Activated CD8-positive, alpha-beta T cell treated with anti-CD3 and anti-CD28 coated beads for 36 hours (primary cell): ENCODE measurements at regions of chr14 and their contacts with region 1.

Region 1: DNA sequence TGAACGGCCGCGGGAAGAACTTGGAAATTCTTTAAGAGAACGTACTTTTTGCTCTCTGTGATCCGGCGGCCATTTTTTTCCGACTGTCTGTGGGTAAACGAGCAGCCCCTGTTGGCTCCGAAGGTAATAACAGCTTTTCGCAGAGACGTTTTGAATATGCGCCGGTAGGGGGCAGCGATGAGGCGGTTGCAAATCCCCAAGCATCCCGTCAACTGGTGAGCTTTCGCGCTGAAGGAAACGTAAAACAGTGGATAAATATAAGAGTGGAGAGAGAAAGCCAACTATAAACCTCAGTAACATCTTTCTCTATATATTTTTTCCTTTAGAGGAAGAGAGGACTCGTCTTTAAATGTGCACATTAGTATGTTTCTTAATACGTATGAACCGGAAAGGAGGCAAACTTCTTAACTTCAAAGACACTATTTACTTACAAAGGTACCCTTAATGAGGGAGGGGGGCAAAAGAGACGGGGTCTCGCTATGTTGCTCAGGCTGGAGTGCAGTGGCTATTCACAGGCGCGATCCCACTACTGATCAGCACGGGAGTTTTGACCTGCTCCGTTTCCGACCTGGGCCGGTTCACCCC is 9.6 kb upstream of the NEMF start:
- DNase-seq: peak; percentile 92
- ATAC-seq: peak; percentile 21
- H3K4me3 Mint-ChIP-seq: no peak overlapping the region
- H3K27ac Mint-ChIP-seq: no peak overlapping the region
- H3K4me1 Mint-ChIP-seq: peaks cover 20% of the 10 kb centered on the region
- H3K27me3 Mint-ChIP-seq: peaks cover 2% of the 10 kb centered on the region
- CTCF ChIP-seq: peak; percentile 100

Region 2: DNA sequence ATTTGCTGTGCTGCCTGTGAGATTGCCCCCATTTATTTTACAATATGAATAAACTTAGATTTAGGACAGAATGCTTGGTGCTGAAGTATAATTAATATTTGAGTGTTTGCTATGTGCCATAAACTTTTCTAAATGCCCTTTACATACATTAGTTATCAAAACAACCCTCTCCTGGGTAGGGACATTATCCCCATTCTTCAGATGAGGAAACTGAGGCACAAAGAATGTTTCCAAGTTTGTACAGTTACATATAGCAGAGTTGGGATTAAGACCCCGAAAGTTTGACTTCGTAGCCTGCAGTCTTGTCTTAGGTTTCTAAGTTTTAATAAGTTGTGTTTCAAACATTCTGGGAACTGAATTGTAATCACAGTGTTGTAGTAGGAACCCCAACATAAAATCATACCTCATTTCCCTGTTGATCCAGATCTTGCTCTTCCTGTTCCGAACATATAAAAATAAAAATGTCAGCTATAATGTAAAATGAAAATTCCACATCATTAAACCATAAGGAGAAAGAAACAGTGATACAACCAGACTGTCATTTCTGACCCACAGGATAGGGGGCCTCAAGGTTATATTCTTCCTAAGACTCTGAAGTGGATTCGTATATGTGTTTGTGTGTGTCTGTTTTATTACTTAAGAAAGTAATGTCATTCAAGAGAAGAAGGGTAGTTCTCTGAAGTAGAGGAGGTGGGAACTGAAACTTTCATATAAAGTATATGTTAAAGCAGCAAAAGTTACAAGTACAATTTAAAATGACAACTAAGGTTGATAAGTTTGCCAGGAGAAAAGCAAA is 75.7 kb before region 1 on chr14:
- CTCF ChIA-PET with region 1: no interaction called
- POLR2A ChIA-PET with region 1: no interaction called
- intact Hi-C with region 1: no loop called
- DNase-seq: no peak
- ATAC-seq: no peak
- H3K4me3 Mint-ChIP-seq: no peak overlapping the region
- H3K27ac Mint-ChIP-seq: peak overlapping the region; percentile 75
- H3K4me1 Mint-ChIP-seq: no peaks in the 10 kb centered on the region
- H3K27me3 Mint-ChIP-seq: no peaks in the 10 kb centered on the region
- CTCF ChIP-seq: no peak

Region 3: DNA sequence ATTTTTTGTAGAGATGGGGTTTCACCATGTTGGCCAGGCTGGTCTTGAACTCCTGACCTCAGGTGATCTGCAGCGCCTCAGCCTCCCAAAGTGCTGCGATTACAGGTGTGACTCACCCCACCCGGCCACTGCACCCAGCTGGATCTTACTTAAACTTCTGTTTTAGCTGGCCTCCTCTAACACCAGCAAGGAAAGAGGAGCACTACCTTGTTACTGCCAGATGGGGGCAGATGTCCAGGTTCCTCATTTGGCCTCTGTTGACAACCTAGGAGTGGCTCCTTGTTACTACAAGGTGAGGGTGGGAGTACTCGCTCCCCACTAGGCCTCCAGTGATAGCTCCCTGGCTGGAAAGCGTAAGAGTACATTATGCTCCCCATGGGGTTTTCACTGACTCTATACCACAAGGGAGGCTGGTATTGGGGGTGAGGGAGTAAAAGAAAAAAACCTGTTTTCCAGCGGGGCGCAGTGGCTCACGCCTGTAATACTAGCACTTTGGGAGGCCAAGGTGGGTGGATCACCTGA is 17.6 kb after region 1 on chr14:
- CTCF ChIA-PET with region 1: interaction called, 31 read pairs
- POLR2A ChIA-PET with region 1: interaction called, 9 read pairs
- intact Hi-C with region 1: no loop called
- DNase-seq: peak; percentile 84
- ATAC-seq: peak; percentile 98
- H3K4me3 Mint-ChIP-seq: no peak overlapping the region
- H3K27ac Mint-ChIP-seq: no peak overlapping the region
- H3K4me1 Mint-ChIP-seq: peaks cover 20% of the 10 kb centered on the region
- H3K27me3 Mint-ChIP-seq: no peaks in the 10 kb centered on the region
- CTCF ChIP-seq: peak; percentile 77

Region 4: GRCh38 chr14:49971156-49972130 is 109.3 kb after region 1 on chr14:
- CTCF ChIA-PET with region 1: interaction called, 16 read pairs
- POLR2A ChIA-PET with region 1: interaction called, 11 read pairs
- intact Hi-C with region 1: no loop called
- DNase-seq: peak; percentile 90
- ATAC-seq: peak; percentile 75
- H3K4me3 Mint-ChIP-seq: peak overlapping the region; percentile 69
- H3K27ac Mint-ChIP-seq: peak overlapping the region; percentile 94
- H3K4me1 Mint-ChIP-seq: peaks cover 56% of the 10 kb centered on the region
- H3K27me3 Mint-ChIP-seq: no peaks in the 10 kb centered on the region
- CTCF ChIP-seq: no peak

Region 5: DNA sequence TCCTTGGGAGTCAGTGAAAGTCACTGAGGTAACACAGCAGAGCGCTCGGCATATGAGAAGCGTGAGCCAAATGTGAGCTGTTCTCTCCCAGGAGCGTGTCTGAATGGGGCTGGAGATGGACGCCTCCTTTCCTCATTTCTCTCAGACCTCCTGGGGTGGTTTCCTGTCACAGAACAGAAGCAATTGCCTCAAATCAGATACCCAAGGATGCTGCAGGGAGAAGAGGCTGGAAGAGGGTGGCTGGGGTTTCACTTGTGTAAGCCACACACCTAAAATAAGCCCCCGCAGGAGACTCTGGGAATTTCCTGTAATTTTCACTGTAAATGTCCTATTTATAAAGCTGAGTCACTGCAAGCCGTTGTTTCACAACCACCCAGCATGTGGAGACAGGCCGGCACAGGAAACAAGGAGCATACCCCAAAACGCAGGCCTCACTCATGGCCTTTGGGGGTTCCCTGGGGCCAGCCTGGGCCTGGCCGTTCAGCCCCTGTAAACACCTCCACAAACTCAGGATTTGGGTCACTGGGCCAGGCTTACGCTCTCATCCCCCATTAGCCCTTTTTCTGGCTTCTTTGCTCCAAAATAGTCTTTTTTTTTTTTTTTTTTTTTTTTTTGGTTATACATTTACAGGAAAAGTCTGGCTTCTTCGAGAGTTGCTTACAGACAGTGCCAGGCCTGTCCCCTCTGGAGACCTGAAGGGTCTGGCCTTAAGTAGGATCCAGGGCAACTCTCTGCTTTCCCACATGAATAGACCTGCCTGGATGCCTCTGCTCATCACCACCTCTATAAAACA is 198.9 kb after region 1 on chr14:
- CTCF ChIA-PET with region 1: interaction called, 63 read pairs
- POLR2A ChIA-PET with region 1: interaction called, 22 read pairs
- intact Hi-C with region 1: no loop called
- DNase-seq: peak; percentile 75
- ATAC-seq: peak; percentile 15
- H3K4me3 Mint-ChIP-seq: peak overlapping the region; percentile 83
- H3K27ac Mint-ChIP-seq: peak overlapping the region; percentile 99
- H3K4me1 Mint-ChIP-seq: peaks cover 71% of the 10 kb centered on the region
- H3K27me3 Mint-ChIP-seq: no peaks in the 10 kb centered on the region
- CTCF ChIP-seq: no peak

Region 6: DNA sequence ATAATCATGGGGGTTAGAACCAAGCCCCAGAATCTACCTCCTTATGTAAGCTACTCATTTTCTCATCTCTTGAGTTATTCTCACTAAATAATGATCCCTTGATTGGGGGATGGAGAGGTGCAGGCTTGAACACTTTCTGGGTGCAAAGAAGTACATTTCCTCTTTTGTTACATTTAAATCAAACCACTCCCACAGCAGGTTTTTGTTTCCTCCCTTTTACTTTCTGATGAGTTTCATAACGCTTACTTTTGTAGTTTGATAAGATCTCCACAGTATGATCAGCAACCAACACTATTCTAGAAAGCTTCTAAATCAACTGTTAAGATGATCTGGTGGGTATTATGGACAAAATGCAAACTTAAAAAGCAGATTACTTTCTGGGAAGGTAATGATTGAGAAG is 233.7 kb after region 1 on chr14:
- CTCF ChIA-PET with region 1: interaction called, 218 read pairs
- POLR2A ChIA-PET with region 1: interaction called, 7 read pairs
- intact Hi-C with region 1: no loop called
- DNase-seq: no peak
- ATAC-seq: peak; percentile 60
- H3K4me3 Mint-ChIP-seq: peak overlapping the region; percentile 31
- H3K27ac Mint-ChIP-seq: peak overlapping the region; percentile 87
- H3K4me1 Mint-ChIP-seq: peaks cover 81% of the 10 kb centered on the region
- H3K27me3 Mint-ChIP-seq: no peaks in the 10 kb centered on the region
- CTCF ChIP-seq: no peak

Region 7: GRCh38 chr14:50116181-50116956 is 254.2 kb after region 1 on chr14 and contains the start of gene VCPKMT:
- CTCF ChIA-PET with region 1: interaction called, 19 read pairs
- POLR2A ChIA-PET with region 1: interaction called, 8 read pairs
- intact Hi-C with region 1: no loop called
- DNase-seq: peak; percentile 97
- ATAC-seq: peak; percentile 100
- H3K4me3 Mint-ChIP-seq: peak within 1 kb of the TSS; percentile 94
- H3K27ac Mint-ChIP-seq: peak within 1 kb of the TSS; percentile 98
- H3K4me1 Mint-ChIP-seq: peaks cover 32% of the 10 kb centered on the region
- H3K27me3 Mint-ChIP-seq: no peaks in the 10 kb centered on the region
- CTCF ChIP-seq: no peak
- total RNA-seq, gene VCPKMT: 11.4 to 11.6 TPM